Posterior cingulate gyrus (tissue), 11 donors: ENCODE measurements at regions of chr1 and their contacts with region 1.

Region 1: DNA sequence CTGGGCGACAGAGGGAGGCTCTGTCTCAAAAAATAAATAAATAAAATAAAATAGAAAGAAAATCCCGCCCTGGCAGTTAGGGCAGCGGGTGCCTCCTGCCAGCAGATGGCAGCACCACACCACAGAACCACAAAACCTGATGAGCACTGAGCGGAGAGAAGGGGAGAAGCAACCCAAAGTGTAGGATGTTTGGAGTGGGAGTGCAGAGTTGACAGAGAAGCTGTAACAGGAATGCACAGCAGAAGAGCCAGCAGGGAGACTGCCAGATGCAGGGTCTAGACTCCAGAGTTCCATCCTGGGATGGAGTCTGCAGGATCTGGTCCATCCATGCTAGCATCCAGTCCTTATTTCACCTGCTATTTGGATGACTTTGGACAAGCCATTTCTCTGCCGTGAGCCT is 29.7 kb upstream of the KIRREL1 start:
- DNase-seq: peak; percentile 48 to 96 (median 78)

Region 2: DNA sequence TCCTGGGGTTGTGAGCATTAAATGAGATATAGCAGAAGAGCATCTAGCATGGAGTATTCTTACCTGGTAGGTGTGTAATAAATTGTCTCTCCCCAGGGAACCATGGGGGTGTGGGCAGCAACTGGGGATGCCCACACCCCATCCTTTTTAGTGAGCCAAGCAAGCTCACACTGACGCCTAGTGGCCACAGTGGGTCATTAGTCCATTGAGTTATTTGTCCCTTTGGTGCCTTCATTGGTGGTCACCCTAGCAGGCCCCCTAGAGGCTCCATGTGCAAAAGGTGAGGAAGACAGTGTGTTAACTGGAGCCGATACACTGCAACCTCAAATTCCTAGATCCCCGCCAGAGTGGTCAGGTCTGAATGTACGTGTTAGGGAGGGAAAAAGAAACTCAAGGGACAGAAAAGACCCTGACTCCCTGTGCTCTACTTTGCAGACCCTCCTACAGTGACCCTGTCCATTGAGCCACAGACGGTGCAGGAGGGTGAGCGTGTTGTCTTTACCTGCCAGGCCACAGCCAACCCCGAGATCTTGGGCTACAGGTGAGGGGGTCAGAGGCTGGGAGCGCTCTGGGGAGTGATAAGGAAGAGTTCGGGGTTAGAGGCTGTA is 123.7 kb after region 1 on chr1:
- intact Hi-C with region 1: loop called (anchors 1 kb)
- DNase-seq: peak in 5 of 10 donors; percentile 27 to 86 (median 46)

Region 3: DNA sequence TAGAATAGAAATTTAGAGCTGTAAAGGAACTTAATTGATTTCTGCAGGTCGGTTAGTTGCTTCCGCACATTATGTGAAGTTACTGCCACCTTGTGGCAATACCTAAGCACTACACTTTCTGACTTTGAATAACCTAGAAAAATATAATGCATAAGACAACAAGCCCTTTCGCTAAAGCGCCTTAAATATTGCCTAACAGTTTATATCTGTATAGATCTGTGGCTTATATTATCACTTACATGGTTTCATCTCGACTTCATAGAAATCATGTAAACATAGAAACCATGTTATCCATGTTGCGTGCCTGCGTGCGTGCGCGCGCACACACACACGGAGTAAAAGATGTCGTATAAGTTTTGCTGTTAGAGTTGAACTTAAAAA is 1035.1 kb after region 1 on chr1:
- intact Hi-C with region 1: loop called (anchors 10 kb)
- DNase-seq: peak in 6 of 10 donors; percentile 48 to 93 (median 54)

Region 4: DNA sequence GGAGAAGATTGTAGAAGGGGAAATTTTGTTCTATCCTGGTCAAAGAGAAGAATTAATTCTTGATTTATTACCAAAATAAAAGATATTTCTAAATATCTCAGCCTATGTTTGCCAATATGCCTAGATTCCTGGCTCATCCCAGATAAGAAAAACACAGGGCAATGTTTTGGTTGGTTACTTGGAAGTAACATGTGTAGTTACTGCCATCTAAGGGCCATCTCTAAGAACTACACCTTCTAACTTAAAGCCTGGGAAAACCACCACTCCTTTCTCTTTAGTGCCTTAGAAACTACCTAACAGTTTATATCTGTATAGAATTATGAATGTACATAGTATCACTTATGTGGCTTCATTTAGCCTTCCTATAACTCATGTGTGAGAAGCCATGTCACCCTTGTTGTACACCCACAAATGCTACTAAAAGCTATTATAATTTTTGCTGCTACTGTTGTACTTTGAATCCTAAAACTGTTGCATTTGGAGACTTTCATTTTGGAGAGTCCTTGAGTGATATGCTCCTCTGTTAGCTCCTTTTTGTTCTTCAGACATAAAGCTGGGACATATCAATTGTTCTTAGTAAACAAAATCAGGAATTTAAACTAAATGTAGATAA is 1108.4 kb after region 1 on chr1:
- intact Hi-C with region 1: loop called (anchors 10 kb)
- DNase-seq: no peak